MCF 10A (cell line): ENCODE measurements at regions of chr5 and their contacts with region 1.

Region 1: GRCh38 chr5:174571662-174572397 is 152.6 kb upstream of the MSX2 start:
- DNase-seq: peak; percentile 99
- H3K4me3 Mint-ChIP-seq: no peak overlapping the region
- H3K27ac Mint-ChIP-seq: no peak overlapping the region
- H3K4me1 Mint-ChIP-seq: peaks cover 21% of the 10 kb centered on the region
- H3K27me3 Mint-ChIP-seq: no peaks in the 10 kb centered on the region
- CTCF ChIP-seq: peak; percentile 22

Region 2: DNA sequence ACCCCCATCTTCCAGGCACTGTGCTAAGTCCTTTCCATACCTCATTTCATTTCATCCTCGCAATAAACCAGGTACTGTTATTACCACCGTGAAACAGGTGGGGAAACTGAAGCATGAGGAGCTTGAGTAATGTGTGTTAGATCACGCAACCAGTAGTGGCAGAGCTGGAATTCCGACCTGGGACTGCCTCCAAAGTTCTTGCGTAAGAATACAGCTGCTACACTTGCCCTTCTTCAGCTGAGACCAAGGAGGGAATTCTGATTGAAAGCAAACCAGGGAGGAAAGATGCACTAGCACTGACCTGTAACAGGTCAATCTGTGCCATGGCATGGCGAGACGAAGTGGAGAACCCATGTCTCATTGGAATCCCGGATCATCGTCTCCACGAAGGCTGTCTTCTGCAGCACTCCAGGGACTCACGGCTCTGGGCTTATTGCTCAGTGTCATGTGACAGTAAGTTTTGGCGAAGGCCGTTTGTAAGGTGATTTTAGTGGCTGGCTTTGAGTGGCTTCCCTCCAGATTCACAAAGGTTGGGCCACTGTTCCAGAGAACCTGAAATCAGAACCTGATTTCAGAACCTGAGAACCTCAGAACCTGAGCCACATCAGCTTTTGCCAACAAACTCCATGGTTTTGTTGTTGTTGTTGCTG is 39.3 kb after region 1 on chr5:
- CTCF ChIA-PET with region 1: no interaction called
- POLR2A ChIA-PET with region 1: no interaction called
- intact Hi-C with region 1: loop called (anchors 5 kb)
- DNase-seq: peak; percentile 92
- H3K4me3 Mint-ChIP-seq: no peak overlapping the region
- H3K27ac Mint-ChIP-seq: no peak overlapping the region
- H3K4me1 Mint-ChIP-seq: peaks cover 17% of the 10 kb centered on the region
- H3K27me3 Mint-ChIP-seq: no peaks in the 10 kb centered on the region
- CTCF ChIP-seq: no peak

Region 3: GRCh38 chr5:174706997-174707572 is 135.3 kb after region 1 on chr5:
- CTCF ChIA-PET with region 1: interaction called, 4 read pairs
- POLR2A ChIA-PET with region 1: no interaction called
- intact Hi-C with region 1: loop called (anchors 1 kb)
- DNase-seq: no peak
- H3K4me3 Mint-ChIP-seq: no peak overlapping the region
- H3K27ac Mint-ChIP-seq: no peak overlapping the region
- H3K4me1 Mint-ChIP-seq: no peaks in the 10 kb centered on the region
- H3K27me3 Mint-ChIP-seq: no peaks in the 10 kb centered on the region
- CTCF ChIP-seq: no peak